Activated naive CD4-positive, alpha-beta T cell treated with anti-CD3 and anti-CD28 coated beads, Interleukin-2, amount 10 ng/mL, durations not matched to agents 7 days and 5 days (primary cell): ENCODE measurements at regions of chr16 and their contacts with region 1.

Region 1: GRCh38 chr16:30722443-30722842 is 23.5 kb downstream of the SRCAP start:
- DNase-seq: no peak
- H3K4me3 Mint-ChIP-seq: no peak overlapping the region
- H3K27ac Mint-ChIP-seq: no peak overlapping the region
- H3K4me1 Mint-ChIP-seq: peaks cover 2% of the 10 kb centered on the region
- H3K27me3 Mint-ChIP-seq: no peaks in the 10 kb centered on the region

Region 2: DNA sequence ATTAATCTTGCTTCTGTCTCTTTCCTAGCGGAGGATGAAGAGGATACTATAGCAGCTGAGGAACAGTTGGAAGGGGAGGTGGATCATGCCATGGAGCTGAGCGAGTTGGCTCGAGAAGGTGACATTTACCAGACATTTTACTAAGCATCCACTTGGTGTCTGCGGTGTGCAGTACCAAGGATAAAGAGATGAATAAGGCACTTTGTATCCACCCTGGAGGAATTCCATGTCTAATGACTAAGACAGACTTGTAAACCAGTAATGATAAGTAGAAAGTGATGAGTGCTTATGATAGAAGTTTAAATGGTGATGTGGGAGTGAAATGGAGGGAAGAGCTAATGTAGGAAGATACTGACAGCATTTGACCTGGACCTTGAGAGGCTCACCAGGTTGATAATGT is 11.5 kb before region 1 on chr16:
- CTCF ChIA-PET with region 1: interaction called, 10 read pairs
- DNase-seq: no peak
- H3K4me3 Mint-ChIP-seq: no peak overlapping the region
- H3K27ac Mint-ChIP-seq: no peak overlapping the region
- H3K4me1 Mint-ChIP-seq: peaks cover 22% of the 10 kb centered on the region
- H3K27me3 Mint-ChIP-seq: no peaks in the 10 kb centered on the region